Aorta (tissue), 5 donors: ENCODE measurements at regions of chr14 and their contacts with region 1.

Region 1: GRCh38 chr14:103808403-103809001 is 38.9 kb downstream of the PPP1R13B start:
- DNase-seq: peak; percentile 80 to 88
- ATAC-seq: peak; percentile 80
- H3K4me3 ChIP-seq: no peak overlapping the region
- H3K27ac ChIP-seq: no peak overlapping the region
- H3K4me1 ChIP-seq: no peaks in the 10 kb centered on the region
- H3K27me3 ChIP-seq: no peaks in the 10 kb centered on the region

Region 2: GRCh38 chr14:103910262-103910935 is 101.9 kb after region 1 on chr14:
- intact Hi-C with region 1: loop called (anchors 2 kb)
- DNase-seq: peak; percentile 78 to 86
- ATAC-seq: peak; percentile 89
- H3K4me3 ChIP-seq: no peak overlapping the region
- H3K27ac ChIP-seq: no peak overlapping the region
- H3K4me1 ChIP-seq: no peaks in the 10 kb centered on the region
- H3K27me3 ChIP-seq: no peaks in the 10 kb centered on the region

Region 3: DNA sequence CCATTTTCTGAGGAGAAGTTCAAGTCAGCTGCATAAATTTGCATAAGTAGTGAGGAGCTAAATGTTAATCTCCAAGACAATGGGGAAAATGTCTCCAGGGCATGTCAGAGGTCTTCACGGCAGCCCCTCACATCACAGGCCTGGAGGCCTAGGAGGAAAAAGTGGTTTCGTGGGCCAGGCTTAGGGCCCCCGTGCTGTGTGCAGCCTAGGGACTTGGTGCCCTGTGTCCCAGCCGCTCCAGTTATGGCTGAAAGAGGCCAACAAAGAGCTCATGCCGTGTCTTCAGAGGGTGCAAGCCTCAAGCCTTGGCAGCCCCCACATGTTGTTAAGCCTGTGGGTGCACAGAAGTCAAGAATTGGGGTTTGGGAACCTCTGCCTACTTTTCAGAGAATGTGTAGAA is 175.7 kb after region 1 on chr14:
- intact Hi-C with region 1: loop called in 1 of 2 experiments (anchors 5 kb)
- DNase-seq: no peak
- ATAC-seq: no peak
- H3K4me3 ChIP-seq: no peak overlapping the region
- H3K27ac ChIP-seq: no peak overlapping the region
- H3K4me1 ChIP-seq: no peaks in the 10 kb centered on the region
- H3K27me3 ChIP-seq: no peaks in the 10 kb centered on the region